ENCODE measurements at regions of chrX and their contacts with region 1.

Region 1: GRCh38 chrX:133415276-133416105 is at the start of gene GPC4:
- DNase-seq: peak; percentile 91
- H3K4me3 ChIP-seq: peak within 1 kb of the TSS; percentile 68 to 77 (median 72)
- H3K27ac ChIP-seq: peak within 1 kb of the TSS; percentile 85 to 89 (median 87)
- H3K4me1 ChIP-seq: peaks cover 0 to 18% (median 9%) of the 10 kb centered on the region in 4 donors
- H3K27me3 ChIP-seq: peaks cover 0 to 4% (median 0%) of the 10 kb centered on the region in 3 donors
- CTCF ChIP-seq: no peak
- EP300 ChIP-seq: no peak
- POLR2A ChIP-seq: peak in 1 of 2 donors; percentile 44
- total RNA-seq, gene GPC4: 25.3 to 45.7 (median 28.1) TPM

Region 2: DNA sequence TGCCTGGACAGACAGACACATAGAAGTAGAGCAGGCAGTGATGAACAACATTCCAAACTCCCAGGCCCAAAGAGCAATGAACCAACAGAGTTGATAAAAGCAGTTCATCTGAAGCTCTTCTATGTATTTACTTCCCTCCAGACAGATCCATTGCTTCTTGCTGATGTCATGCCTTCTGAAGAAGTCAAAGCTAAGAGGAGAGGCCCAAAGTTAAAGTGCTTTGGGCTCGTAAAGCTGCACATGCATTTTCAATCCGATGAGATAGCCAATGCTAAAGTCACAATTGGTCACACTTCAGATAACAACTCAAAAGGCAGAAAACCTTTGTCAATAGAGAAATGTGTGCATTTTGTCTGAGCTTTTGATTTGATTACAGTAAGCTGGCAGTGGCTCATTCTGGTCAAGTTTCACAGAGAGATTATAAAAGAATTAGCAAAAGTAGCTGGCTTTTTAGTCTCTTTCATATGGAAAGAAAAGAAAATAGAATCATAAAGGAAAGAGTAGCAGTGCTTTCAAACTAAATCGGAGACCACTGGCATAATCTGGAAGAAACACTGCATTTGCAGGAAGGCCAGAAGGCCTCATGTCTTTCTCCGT is 82.2 kb before region 1 on chrX:
- intact Hi-C with region 1: loop called (anchors 5 kb)
- DNase-seq: no peak
- H3K4me3 ChIP-seq: no peak overlapping the region
- H3K27ac ChIP-seq: peak overlapping the region in 3 of 4 donors; percentile 17 to 50 (median 42)
- H3K4me1 ChIP-seq: peaks cover 0 to 49% (median 11%) of the 10 kb centered on the region in 4 donors
- H3K27me3 ChIP-seq: no peaks in the 10 kb centered on the region
- CTCF ChIP-seq: no peak
- EP300 ChIP-seq: no peak
- POLR2A ChIP-seq: no peak

Region 3: DNA sequence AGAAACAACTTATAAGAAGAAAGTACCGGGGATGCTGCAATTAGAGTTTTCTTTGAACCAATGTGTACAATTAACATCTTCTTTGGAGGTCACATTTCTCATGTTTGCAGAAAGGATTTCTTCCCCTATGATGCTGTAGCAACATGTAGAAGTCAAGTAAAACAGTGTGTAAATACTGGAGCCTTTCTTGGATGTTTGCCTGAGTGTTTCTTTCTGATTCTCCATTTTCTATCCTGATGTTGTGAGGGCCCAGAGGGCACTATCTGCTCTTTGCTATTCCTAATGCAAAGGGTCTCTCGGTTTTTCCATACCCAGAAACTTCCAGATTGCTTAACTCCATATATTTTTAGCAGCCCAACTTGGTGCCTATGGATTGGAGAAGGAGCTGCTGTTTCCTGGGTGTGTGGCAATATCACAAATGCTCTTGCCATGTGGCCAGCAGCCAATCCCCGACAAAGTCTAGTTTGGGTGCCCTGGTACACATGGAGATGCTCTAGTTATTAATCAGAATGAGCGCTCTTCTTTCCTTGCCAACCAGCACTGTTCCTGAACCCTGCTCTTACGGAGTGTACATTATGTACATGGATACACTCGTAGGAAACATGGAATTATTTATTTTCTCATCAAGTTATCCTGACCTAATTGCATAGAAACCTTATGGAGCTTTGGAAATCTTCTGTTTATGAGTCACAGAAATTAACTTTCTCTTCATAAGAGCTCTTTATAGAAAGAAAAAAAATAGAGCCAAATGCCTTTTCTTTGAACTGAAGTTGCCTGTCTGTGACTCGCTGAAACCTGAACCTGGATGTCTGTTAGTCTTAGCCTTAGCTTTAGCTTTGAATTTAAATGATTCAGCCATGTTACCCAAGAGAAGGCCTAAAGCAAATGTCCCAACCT is 66.8 kb after region 1 on chrX:
- intact Hi-C with region 1: loop called (anchors 5 kb)
- DNase-seq: peak; percentile 88
- H3K4me3 ChIP-seq: no peak overlapping the region
- H3K27ac ChIP-seq: peak overlapping the region; percentile 59 to 70 (median 62)
- H3K4me1 ChIP-seq: peaks cover 0 to 20% (median 17%) of the 10 kb centered on the region in 4 donors
- H3K27me3 ChIP-seq: no peaks in the 10 kb centered on the region
- CTCF ChIP-seq: no peak
- EP300 ChIP-seq: peak in 1 of 4 donors; percentile 43
- POLR2A ChIP-seq: no peak

Region 4: DNA sequence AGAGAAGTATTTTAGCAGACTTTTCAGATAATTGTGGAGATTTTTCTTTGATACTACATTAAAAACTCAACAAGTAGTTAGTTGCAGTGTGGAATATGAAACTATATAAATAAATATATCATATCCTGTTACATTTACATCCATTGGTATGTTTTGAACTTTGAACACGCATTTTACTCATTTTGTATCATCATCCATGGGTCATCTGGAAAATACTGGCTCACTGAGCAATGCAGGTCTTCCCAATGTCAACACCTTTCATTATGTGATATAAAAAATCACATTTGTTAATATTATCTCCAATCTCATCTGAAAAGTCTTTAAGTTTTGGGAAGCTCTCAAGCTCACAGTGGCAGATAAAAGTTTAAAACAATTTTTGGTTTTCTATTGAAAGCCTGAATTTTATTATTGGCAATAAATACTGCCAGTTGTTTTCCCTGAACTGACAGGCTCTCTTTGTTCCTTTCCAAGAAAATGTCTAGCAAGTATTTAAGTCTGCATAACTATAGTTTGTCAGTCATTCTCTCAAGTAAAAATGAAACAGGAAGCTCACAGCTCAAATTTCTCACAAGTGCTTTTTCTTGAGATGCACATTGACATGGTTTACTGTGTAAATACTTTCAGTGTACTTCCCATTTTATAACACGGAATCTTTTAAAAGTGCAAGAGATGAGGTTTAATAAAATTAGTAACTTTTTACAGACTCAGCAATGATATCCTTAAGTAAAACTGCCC is 183.3 kb after region 1 on chrX:
- intact Hi-C with region 1: no loop called
- DNase-seq: no peak
- H3K4me3 ChIP-seq: no peak overlapping the region
- H3K27ac ChIP-seq: no peak overlapping the region
- H3K4me1 ChIP-seq: no peaks in the 10 kb centered on the region
- H3K27me3 ChIP-seq: no peaks in the 10 kb centered on the region
- CTCF ChIP-seq: no peak
- EP300 ChIP-seq: no peak
- POLR2A ChIP-seq: no peak

Measured in sigmoid colon (tissue), 7 donors.